ENCODE measurements at regions of chr11 and their contacts with region 1.

Region 1: GRCh38 chr11:61985885-61986345 is 18.5 kb upstream of the FTH1 start:
- DNase-seq: no peak

Region 2: GRCh38 chr11:62024936-62025486 is 39.1 kb after region 1 on chr11:
- intact Hi-C with region 1: loop called in 1 of 2 experiments (anchors 1 kb)
- DNase-seq: no peak

Region 3: GRCh38 chr11:62256281-62256680 is 270.4 kb after region 1 on chr11:
- intact Hi-C with region 1: no loop called
- DNase-seq: no peak

Measured in posterior vena cava (tissue), 2 donors.